Mammary epithelial cell (primary cell): ENCODE measurements at regions of chr12 and their contacts with region 1.

Region 1: DNA sequence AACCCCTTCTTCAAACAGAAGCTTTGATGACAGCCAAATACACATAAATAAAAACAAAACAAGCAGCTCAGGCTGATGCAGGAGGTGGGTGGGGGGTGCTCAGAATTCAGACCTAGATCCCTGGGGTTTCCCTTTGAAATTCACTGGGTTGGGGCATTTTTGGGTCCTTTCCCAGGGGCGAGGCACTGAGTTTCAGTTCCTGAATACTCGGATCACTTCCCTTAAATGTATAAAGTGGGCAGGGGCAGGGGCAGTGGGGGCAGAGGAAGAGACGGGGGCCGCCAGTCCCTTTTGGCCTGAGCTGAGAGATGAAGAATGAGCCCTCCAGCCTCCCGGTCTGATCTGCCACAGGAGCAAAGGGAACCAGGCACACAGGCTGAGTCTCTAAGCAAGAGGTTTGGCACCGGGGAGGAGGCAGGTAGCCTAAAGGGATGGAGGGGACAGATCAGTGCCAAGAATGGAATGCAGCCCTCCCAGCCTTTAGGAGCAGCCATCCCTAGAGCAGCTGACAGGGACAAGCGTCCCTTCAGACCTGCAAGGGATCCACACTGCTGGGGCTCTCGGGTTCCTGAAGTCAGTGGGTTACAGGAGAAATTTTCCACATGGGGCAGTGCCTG is 20.3 kb downstream of the KDM2B start:
- DNase-seq: no peak
- H3K4me3 ChIP-seq: no peak overlapping the region
- H3K27ac ChIP-seq: no peak overlapping the region
- H3K4me1 ChIP-seq: no peaks in the 10 kb centered on the region
- H3K27me3 ChIP-seq: peaks cover 2% of the 10 kb centered on the region
- CTCF ChIP-seq: no peak

Region 2: DNA sequence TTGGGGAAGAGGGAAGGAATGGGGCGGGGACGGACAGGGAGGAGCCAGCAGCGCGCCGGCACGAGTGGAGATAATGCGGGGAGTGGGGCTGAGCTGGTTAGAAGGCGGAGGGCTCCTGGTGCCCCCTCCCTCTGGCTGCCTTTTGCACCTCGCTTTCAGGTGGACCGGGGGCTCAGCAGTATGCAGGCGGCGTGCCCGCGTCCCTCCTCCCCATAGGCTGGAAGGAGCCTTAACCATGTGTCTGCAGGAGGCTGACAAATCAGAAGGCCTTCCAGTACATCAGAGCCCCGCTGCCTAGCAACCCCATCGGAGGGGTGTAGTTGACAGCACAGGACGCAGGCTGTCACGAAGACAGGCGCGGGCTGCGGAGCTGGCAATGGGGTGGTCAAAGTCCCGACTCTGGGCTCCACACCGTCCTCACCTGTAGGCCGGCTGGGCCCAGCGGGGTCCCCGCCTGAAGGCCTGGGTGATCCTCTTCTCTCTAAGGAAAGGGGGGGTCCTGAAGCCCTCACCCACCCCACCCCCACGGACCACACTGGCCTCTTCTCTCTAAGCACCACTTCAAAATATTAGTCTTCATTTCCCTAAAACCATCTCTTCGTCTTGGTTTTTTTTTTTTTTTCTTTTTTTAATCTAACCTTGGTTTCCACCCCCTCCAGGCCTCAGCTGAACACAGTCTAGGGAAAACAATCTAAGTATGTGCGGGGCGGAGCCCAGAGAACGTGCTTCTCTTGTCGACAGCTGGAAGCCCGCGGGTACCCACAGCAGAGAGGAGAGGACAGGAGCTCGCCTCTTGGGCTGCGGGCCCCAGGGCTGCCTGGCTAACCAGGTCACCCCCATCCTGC is 24.2 kb before region 1 on chr12:
- CTCF ChIA-PET with region 1: no interaction called
- dilution Hi-C with region 1: no loop called
- in situ Hi-C with region 1: no loop called
- intact Hi-C with region 1: no loop called
- DNase-seq: no peak
- H3K4me3 ChIP-seq: peak overlapping the region in 1 of 3 experiments; percentile 0
- H3K27ac ChIP-seq: no peak overlapping the region
- H3K4me1 ChIP-seq: peaks cover 12% of the 10 kb centered on the region
- H3K27me3 ChIP-seq: peaks cover 12% of the 10 kb centered on the region
- CTCF ChIP-seq: no peak

Region 3: GRCh38 chr12:121610239-121611149 is 50.0 kb after region 1 on chr12:
- CTCF ChIA-PET with region 1: no interaction called
- dilution Hi-C with region 1: loop called (anchors 5 kb)
- in situ Hi-C with region 1: loop called in 1 of 2 experiments (anchors 10 kb)
- intact Hi-C with region 1: no loop called
- DNase-seq: no peak
- H3K4me3 ChIP-seq: no peak overlapping the region
- H3K27ac ChIP-seq: no peak overlapping the region
- H3K4me1 ChIP-seq: no peaks in the 10 kb centered on the region
- H3K27me3 ChIP-seq: no peaks in the 10 kb centered on the region
- CTCF ChIP-seq: no peak

Region 4: GRCh38 chr12:121753844-121754264 is 193.4 kb after region 1 on chr12:
- CTCF ChIA-PET with region 1: no interaction called
- dilution Hi-C with region 1: loop called (anchors 5 kb)
- in situ Hi-C with region 1: no loop called
- intact Hi-C with region 1: no loop called
- DNase-seq: no peak
- H3K4me3 ChIP-seq: no peak overlapping the region
- H3K27ac ChIP-seq: no peak overlapping the region
- H3K4me1 ChIP-seq: no peaks in the 10 kb centered on the region
- H3K27me3 ChIP-seq: no peaks in the 10 kb centered on the region
- CTCF ChIP-seq: no peak